K562 (cell line): ENCODE measurements at regions of chr7 and their contacts with region 1.

Region 1: GRCh38 chr7:22110227-22110839 is 164.6 kb upstream of the CDCA7L start:
- DNase-seq: peak; percentile 62 to 86 (median 68)
- ATAC-seq: peak; percentile 93
- H3K4me3 ChIP-seq: no peak overlapping the region
- H3K27ac ChIP-seq: no peak overlapping the region
- H3K4me1 ChIP-seq: peaks cover 3 to 15% of the 10 kb centered on the region in 2 experiments; a peak in 4 of 5 replicates
- H3K27me3 ChIP-seq: peaks cover 6 to 10% of the 10 kb centered on the region in 2 experiments; a peak in 2 of 5 replicates
- CTCF ChIP-seq: peak; percentile 81 to 99 (median 96)
- EP300 ChIP-seq: no peak
- POLR2A ChIP-seq: no peak
- RAD21 ChIP-seq: peak; percentile 99

Region 2: DNA sequence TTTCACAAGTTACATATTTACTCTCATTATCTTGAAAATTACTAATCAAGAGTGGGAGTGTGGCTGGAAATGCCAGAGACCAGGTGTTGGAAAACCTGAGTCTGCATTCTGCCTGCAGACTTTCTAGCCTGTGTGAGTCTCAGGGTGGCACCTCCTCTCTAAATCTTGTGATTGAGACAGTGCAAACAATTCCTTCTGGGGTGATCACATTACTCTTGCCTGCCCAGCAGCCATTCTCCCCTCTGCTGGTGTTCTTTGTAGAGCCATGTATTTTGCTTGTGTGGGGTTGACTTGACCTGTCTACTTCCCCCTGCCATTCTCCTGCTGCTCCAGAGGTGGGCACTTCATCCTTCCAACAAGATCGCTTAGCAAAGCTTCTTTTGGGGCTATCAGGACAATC is 145.5 kb after region 1 on chr7:
- CTCF ChIA-PET with region 1: interaction called, 3 read pairs
- POLR2A ChIA-PET with region 1: interaction called, 3 read pairs
- in situ Hi-C with region 1: no loop called
- intact Hi-C with region 1: loop called (anchors 5 kb)
- DNase-seq: no peak
- ATAC-seq: no peak
- H3K4me3 ChIP-seq: no peak overlapping the region
- H3K27ac ChIP-seq: no peak overlapping the region
- H3K4me1 ChIP-seq: no peaks in the 10 kb centered on the region
- H3K27me3 ChIP-seq: no peaks in the 10 kb centered on the region
- CTCF ChIP-seq: no peak
- EP300 ChIP-seq: no peak
- POLR2A ChIP-seq: no peak
- RAD21 ChIP-seq: no peak

Region 3: GRCh38 chr7:22295402-22296264 is 185.3 kb after region 1 on chr7:
- CTCF ChIA-PET with region 1: interaction called, 34 read pairs
- POLR2A ChIA-PET with region 1: interaction called, 3 read pairs
- in situ Hi-C with region 1: loop called (anchors 10 kb)
- intact Hi-C with region 1: loop called (anchors 1 kb)
- DNase-seq: no peak
- ATAC-seq: no peak
- H3K4me3 ChIP-seq: no peak overlapping the region
- H3K27ac ChIP-seq: no peak overlapping the region
- H3K4me1 ChIP-seq: no peaks in the 10 kb centered on the region
- H3K27me3 ChIP-seq: peaks cover 4 to 7% of the 10 kb centered on the region in 2 experiments; a peak in 3 of 5 replicates
- CTCF ChIP-seq: peak in 2 of 3 experiments; percentile 15 to 51; a peak in 2 of 6 replicates
- EP300 ChIP-seq: no peak
- POLR2A ChIP-seq: no peak
- RAD21 ChIP-seq: peak; percentile 47 to 68; a peak in 3 of 4 replicates

Region 4: DNA sequence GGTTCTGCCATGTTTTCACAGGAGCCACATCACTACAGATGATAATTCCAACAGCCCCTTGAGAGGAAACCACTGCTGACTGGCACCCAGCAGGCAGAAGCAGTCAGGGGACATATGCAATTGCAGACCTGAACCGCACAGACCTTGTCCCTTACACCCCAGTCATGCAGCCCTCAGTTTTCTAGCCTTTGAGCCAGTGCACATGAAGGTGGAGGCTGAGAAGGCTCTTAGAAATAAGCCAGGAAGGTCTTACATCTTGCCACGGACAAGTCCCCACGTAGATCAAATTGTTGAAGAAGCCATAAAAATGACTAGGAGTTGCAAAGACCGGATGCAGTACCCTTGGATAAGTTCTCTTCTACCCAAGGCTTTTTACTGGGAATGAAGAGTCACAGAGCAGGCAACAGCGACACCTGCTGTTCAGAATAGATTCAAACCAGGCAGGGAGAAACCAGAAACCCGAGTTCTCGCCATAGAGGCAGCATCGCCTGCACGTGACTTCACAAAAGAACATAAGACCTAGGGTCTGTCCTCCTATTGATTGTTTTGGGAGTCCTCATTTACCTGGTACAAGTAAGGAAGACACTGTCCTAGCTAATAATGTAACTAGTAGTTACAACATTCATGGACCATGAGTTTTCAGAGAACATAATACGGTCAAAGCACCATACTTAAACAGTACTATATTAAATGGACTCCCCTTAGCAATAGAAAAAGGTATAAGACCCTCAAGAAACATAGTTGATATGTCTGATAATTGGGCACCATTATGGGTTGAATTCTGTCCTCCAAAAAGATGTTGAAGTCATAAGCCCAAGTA is 378.5 kb after region 1 on chr7:
- CTCF ChIA-PET with region 1: interaction called, 70 read pairs
- POLR2A ChIA-PET with region 1: interaction called, 3 read pairs
- in situ Hi-C with region 1: loop called (anchors 5 kb)
- intact Hi-C with region 1: loop called (anchors 1 kb)
- DNase-seq: peak; percentile 63 to 81 (median 66)
- ATAC-seq: peak; percentile 93
- H3K4me3 ChIP-seq: no peak overlapping the region
- H3K27ac ChIP-seq: no peak overlapping the region
- H3K4me1 ChIP-seq: no peaks in the 10 kb centered on the region
- H3K27me3 ChIP-seq: no peaks in the 10 kb centered on the region
- CTCF ChIP-seq: peak; percentile 84 to 93 (median 84)
- EP300 ChIP-seq: 0 out of 2 replicates have a peak, but pooled peaks have one; percentile 4
- POLR2A ChIP-seq: no peak
- RAD21 ChIP-seq: peak; percentile 95 to 97

Region 5: DNA sequence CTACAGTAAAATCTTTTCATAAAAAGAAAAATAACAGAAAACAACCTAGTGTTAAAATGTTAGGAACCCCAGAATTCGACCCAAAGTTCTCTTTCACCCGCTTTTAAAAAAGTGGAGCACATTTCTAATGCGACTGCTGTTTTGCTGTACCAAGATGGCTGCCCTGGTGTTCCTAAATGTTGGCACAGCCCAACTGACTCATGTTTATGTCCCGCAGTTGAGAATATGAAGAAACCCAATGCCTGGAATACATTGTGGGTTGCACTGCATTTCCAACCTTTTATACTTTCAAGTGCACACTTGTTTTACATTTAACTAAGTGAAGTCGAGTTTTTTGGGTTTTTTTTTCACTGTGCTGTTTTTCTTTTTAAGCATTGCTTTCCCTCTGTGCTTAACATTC is 388.7 kb after region 1 on chr7:
- CTCF ChIA-PET with region 1: interaction called, 10 read pairs
- POLR2A ChIA-PET with region 1: no interaction called
- in situ Hi-C with region 1: no loop called
- intact Hi-C with region 1: no loop called
- DNase-seq: peak in 1 of 4 experiments; percentile 33
- ATAC-seq: no peak
- H3K4me3 ChIP-seq: peak overlapping the region; percentile 50
- H3K27ac ChIP-seq: peak overlapping the region; percentile 79; the same call in 2 of the 3 replicates
- H3K4me1 ChIP-seq: peaks cover 2 to 4% of the 10 kb centered on the region in 2 experiments; a peak in 4 of 5 replicates
- H3K27me3 ChIP-seq: no peaks in the 10 kb centered on the region
- CTCF ChIP-seq: no peak
- EP300 ChIP-seq: no peak
- POLR2A ChIP-seq: no peak
- RAD21 ChIP-seq: no peak

Region 6: DNA sequence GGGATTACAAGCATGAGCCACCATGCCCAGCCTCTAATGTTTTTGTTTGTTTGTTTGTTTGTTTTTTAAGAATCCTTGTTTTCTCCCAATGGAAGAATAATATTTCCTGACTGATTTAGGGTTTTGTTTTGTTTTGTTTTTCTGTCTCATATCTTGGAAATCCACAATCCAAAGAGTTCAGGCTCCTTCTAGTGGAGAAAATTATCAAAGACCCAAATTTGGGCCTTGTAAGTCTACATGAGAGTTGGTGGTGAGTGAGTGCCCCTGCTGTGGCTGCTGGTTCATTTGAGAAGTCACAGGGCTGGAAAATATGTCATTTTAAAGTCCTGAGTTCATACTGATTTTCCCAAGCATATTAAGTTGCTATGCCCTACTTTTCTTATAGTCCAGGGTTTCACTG is 961.7 kb after region 1 on chr7:
- CTCF ChIA-PET with region 1: no interaction called
- POLR2A ChIA-PET with region 1: no interaction called
- in situ Hi-C with region 1: loop called (anchors 5 kb)
- intact Hi-C with region 1: no loop called
- DNase-seq: peak in 1 of 4 experiments; percentile 40
- ATAC-seq: peak; percentile 80
- H3K4me3 ChIP-seq: no peak overlapping the region
- H3K27ac ChIP-seq: no peak overlapping the region
- H3K4me1 ChIP-seq: peaks cover 0 to 20% of the 10 kb centered on the region in 2 experiments; a peak in 3 of 5 replicates
- H3K27me3 ChIP-seq: no peaks in the 10 kb centered on the region
- CTCF ChIP-seq: peak; percentile 34 to 66 (median 53); a peak in 4 of 6 replicates
- EP300 ChIP-seq: no peak
- POLR2A ChIP-seq: no peak
- RAD21 ChIP-seq: peak; percentile 58 to 79

Region 7: GRCh38 chr7:23462846-23463245 is 1352.5 kb after region 1 on chr7:
- CTCF ChIA-PET with region 1: no interaction called
- POLR2A ChIA-PET with region 1: no interaction called
- in situ Hi-C with region 1: no loop called
- intact Hi-C with region 1: no loop called
- DNase-seq: peak in 1 of 4 experiments; percentile 4
- ATAC-seq: no peak
- H3K4me3 ChIP-seq: no peak overlapping the region
- H3K27ac ChIP-seq: no peak overlapping the region
- H3K4me1 ChIP-seq: peaks cover 9 to 34% of the 10 kb centered on the region in 2 experiments; a peak in 4 of 5 replicates
- H3K27me3 ChIP-seq: no peaks in the 10 kb centered on the region
- CTCF ChIP-seq: no peak; a peak in 1 of 6 replicates
- EP300 ChIP-seq: no peak
- POLR2A ChIP-seq: no peak
- RAD21 ChIP-seq: peak; percentile 55 to 62